ENCODE measurements at regions of chr18 and their contacts with region 1.

Region 1: GRCh38 chr18:49510393-49511115 is 23.5 kb upstream of the C18orf32 start:
- DNase-seq: peak; percentile 59
- ATAC-seq: peak; percentile 74
- H3K4me3 Mint-ChIP-seq: no peak overlapping the region
- H3K27ac Mint-ChIP-seq: no peak overlapping the region
- H3K4me1 Mint-ChIP-seq: no peaks in the 10 kb centered on the region
- H3K27me3 Mint-ChIP-seq: peaks cover 18% of the 10 kb centered on the region

Region 2: GRCh38 chr18:49494660-49495059 is 15.9 kb before region 1 on chr18:
- CTCF ChIA-PET with region 1: interaction called, 13 read pairs
- POLR2A ChIA-PET with region 1: no interaction called
- DNase-seq: no peak
- ATAC-seq: no peak
- H3K4me3 Mint-ChIP-seq: no peak overlapping the region
- H3K27ac Mint-ChIP-seq: no peak overlapping the region
- H3K4me1 Mint-ChIP-seq: peaks cover 24% of the 10 kb centered on the region
- H3K27me3 Mint-ChIP-seq: peaks cover 6% of the 10 kb centered on the region

Region 3: DNA sequence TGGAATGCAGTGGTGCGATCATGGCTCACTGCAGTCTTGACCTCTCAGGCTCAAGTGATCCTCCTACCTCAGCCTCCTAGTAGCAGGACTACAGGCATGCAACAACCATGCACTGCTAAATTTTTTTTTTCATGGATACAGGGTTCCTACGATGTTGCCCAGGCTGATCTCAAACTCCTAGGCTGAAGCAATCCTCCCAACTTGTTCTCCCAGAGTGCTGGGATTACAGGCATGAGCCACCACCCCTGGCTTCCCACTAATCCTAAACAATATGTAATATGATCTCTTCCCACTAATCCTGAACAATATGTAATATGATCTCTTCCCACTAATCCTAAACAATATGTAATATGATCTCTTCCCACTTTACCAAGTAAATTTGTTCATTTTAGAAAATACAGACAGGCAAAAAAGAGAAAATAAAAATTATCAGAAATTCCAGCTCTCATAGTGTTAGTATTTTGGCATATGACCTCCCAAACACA is 10.1 kb after region 1 on chr18:
- CTCF ChIA-PET with region 1: interaction called, 14 read pairs
- POLR2A ChIA-PET with region 1: no interaction called
- DNase-seq: no peak
- ATAC-seq: no peak
- H3K4me3 Mint-ChIP-seq: no peak overlapping the region
- H3K27ac Mint-ChIP-seq: no peak overlapping the region
- H3K4me1 Mint-ChIP-seq: no peaks in the 10 kb centered on the region
- H3K27me3 Mint-ChIP-seq: peaks cover 9% of the 10 kb centered on the region

Measured in activated CD8-positive, alpha-beta T cell treated with anti-CD3 and anti-CD28 coated beads, Interleukin-2, amount 10 ng/mL, durations not matched to agents 7 days and 5 days (primary cell).